GM12878 (cell line): ENCODE measurements at regions of chr2 and their contacts with region 1.

Region 1: DNA sequence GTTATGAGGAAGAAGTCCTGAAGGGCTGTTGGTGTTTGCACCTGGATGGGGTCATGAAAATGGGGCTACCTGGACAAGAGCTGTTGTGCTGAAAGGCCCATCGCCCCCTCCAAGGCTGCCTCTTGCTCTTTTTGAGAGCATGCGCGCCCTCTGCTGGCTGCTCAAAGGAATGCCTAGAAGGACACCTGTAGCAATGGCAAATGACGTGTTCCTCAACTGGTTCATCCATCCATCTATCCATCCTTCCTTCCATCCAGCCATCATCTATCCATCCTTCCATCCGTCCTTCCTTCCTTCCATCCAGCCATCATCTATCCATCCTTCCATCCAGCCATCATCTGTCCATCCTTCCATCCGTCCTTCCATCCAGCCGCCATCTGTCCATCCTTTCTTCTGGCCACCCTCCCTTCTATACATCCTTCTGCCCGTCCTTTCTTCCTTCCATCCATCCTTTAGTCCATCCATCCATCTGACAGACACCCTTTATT is 17.2 kb upstream of the RPL31 start:
- DNase-seq: no peak
- ATAC-seq: peak; percentile 93
- H3K4me3 ChIP-seq: no peak overlapping the region
- H3K27ac ChIP-seq: no peak overlapping the region
- H3K4me1 ChIP-seq: no peaks in the 10 kb centered on the region
- H3K27me3 ChIP-seq: no peaks in the 10 kb centered on the region; a peak in 1 of 4 replicates
- CTCF ChIP-seq: peak; percentile 85 to 91 (median 89)
- EP300 ChIP-seq: no peak
- POLR2A ChIP-seq: no peak
- RAD21 ChIP-seq: peak; percentile 89

Region 2: GRCh38 chr2:100427628-100428258 is 557.2 kb before region 1 on chr2:
- CTCF ChIA-PET with region 1: no interaction called
- POLR2A ChIA-PET with region 1: no interaction called
- RAD21 ChIA-PET with region 1: no interaction called
- SMC1A ChIA-PET with region 1: interaction called, 3 read pairs
- in situ Hi-C with region 1: loop called (anchors 10 kb)
- intact Hi-C with region 1: no loop called
- DNase-seq: no peak
- ATAC-seq: peak; percentile 67
- H3K4me3 ChIP-seq: no peak overlapping the region
- H3K27ac ChIP-seq: no peak overlapping the region
- H3K4me1 ChIP-seq: no peaks in the 10 kb centered on the region
- H3K27me3 ChIP-seq: no peaks in the 10 kb centered on the region
- CTCF ChIP-seq: peak; percentile 29 to 46 (median 37); a peak in 5 of 6 replicates
- EP300 ChIP-seq: no peak
- POLR2A ChIP-seq: no peak
- RAD21 ChIP-seq: peak; percentile 67

Region 3: GRCh38 chr2:100610381-100610831 is 374.5 kb before region 1 on chr2:
- CTCF ChIA-PET with region 1: interaction called, 73 read pairs
- POLR2A ChIA-PET with region 1: no interaction called
- RAD21 ChIA-PET with region 1: interaction called, 4 read pairs
- SMC1A ChIA-PET with region 1: interaction called, 6 read pairs
- in situ Hi-C with region 1: loop called (anchors 5 kb)
- intact Hi-C with region 1: loop called (anchors 1 kb)
- DNase-seq: no peak
- ATAC-seq: peak; percentile 93
- H3K4me3 ChIP-seq: no peak overlapping the region
- H3K27ac ChIP-seq: no peak overlapping the region
- H3K4me1 ChIP-seq: no peaks in the 10 kb centered on the region
- H3K27me3 ChIP-seq: no peaks in the 10 kb centered on the region; a peak in 1 of 4 replicates
- CTCF ChIP-seq: peak; percentile 63 to 70 (median 69)
- EP300 ChIP-seq: no peak
- POLR2A ChIP-seq: no peak
- RAD21 ChIP-seq: peak; percentile 79

Region 4: DNA sequence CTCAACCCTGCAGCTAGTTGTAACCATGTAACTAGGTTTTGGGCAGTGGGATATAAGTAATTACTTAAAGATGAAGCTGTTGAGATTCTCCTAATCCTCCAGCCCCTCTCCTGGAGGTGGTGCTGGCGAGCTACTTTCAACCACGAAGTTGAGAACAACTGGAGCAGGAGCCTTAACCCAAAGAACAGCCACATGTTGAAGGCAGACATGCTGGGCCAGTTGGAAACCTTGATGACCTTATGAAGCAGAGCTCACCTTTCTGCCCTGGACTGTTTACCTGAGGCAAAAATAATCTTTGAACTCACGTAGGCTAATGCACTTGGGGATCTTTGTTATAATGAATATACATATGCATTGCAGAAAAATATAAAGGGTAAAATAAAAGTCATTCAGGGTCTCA is 254.6 kb before region 1 on chr2:
- CTCF ChIA-PET with region 1: interaction called, 7 read pairs
- POLR2A ChIA-PET with region 1: no interaction called
- RAD21 ChIA-PET with region 1: no interaction called
- SMC1A ChIA-PET with region 1: no interaction called
- in situ Hi-C with region 1: loop called (anchors 10 kb)
- intact Hi-C with region 1: loop called (anchors 2 kb)
- DNase-seq: no peak
- ATAC-seq: no peak
- H3K4me3 ChIP-seq: no peak overlapping the region
- H3K27ac ChIP-seq: no peak overlapping the region
- H3K4me1 ChIP-seq: no peaks in the 10 kb centered on the region
- H3K27me3 ChIP-seq: 0 out of 4 replicates have a peak, but pooled peaks cover 0 to 2% of the 10 kb centered on the region in 2 experiments
- CTCF ChIP-seq: peak; percentile 28 to 40 (median 38); a peak in 5 of 6 replicates
- EP300 ChIP-seq: no peak
- POLR2A ChIP-seq: no peak
- RAD21 ChIP-seq: peak; percentile 50

Region 5: DNA sequence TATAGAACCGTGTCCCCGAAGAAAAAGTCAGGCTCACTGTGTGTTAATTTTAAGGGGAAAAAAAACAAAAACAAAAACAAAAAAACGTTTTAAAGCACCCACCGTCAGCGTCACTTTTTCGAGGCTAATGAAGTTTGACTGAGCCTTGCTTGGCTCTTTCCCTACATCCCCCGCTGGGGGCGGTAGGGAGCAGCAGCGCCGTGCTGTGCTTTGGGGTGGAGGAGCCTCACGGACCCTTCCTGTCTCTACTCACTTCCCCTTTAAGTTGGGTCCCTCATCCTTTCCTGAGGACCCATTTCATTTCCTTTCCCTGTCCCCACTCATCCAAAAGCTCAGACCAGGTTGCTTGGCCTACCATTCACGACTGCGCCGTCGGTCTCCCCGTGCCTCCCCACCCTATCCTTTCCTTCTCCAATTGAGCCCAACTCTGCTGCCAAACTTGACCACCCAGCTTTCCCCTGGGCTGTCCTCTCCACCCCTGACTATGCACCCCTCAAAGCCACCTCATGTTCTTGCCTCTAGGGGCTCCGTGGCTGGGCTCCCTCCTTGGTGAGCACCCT is 65.5 kb before region 1 on chr2:
- CTCF ChIA-PET with region 1: interaction called, 3 read pairs
- POLR2A ChIA-PET with region 1: no interaction called
- RAD21 ChIA-PET with region 1: no interaction called
- SMC1A ChIA-PET with region 1: no interaction called
- in situ Hi-C with region 1: no loop called
- intact Hi-C with region 1: loop called (anchors 2 kb)
- DNase-seq: no peak
- ATAC-seq: peak; percentile 57
- H3K4me3 ChIP-seq: no peak overlapping the region
- H3K27ac ChIP-seq: no peak overlapping the region
- H3K4me1 ChIP-seq: no peaks in the 10 kb centered on the region
- H3K27me3 ChIP-seq: no peaks in the 10 kb centered on the region; a peak in 2 of 4 replicates
- CTCF ChIP-seq: peak; percentile 16 to 66 (median 45); a peak in 5 of 6 replicates
- EP300 ChIP-seq: no peak
- POLR2A ChIP-seq: no peak
- RAD21 ChIP-seq: no peak